Calu3 (cell line): ENCODE measurements at regions of chr4 and their contacts with region 1.

Region 1: DNA sequence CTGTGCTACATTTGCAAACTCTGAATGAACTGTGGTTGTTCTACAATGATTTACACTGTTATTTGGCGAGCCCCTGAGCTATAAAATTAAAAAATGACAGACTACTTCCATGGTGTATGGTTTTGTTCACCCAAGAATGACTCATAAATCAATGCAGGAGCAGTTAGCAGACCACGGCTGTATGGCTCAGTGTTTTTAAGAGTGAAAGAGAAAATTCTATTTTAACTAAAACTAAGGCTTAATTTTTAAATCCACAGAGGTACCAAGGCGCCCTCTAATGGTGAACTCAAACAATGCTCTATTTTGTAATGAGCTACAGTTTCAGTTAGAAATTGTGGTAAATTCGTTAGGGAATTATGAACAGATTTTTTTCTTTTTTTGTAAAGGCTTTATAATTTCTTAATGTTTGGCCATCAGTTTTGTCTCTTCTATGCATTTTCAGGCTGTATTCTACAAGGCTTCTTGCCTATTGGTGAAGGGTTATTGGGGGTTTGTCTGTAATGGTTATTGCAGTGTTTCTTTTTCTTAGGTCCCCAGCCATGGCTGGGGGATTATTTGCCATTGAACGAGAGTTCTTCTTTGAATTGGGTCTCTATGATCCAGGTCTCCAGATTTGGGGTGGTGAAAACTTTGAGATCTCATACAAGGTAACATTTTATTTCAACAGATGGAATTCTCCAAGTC is 32.5 kb downstream of the HMGB2 start:
- DNase-seq: peak; percentile 16
- H3K4me3 Mint-ChIP-seq: no peak overlapping the region
- H3K27ac Mint-ChIP-seq: no peak overlapping the region
- H3K4me1 Mint-ChIP-seq: peaks cover 7% of the 10 kb centered on the region
- H3K27me3 Mint-ChIP-seq: no peaks in the 10 kb centered on the region
- CTCF ChIP-seq: peak; percentile 19

Region 2: GRCh38 chr4:173013232-173013930 is 288.3 kb before region 1 on chr4:
- CTCF ChIA-PET with region 1: interaction called, 33 read pairs
- intact Hi-C with region 1: loop called (anchors 1 kb)
- DNase-seq: peak; percentile 34
- H3K4me3 Mint-ChIP-seq: no peak overlapping the region
- H3K27ac Mint-ChIP-seq: no peak overlapping the region
- H3K4me1 Mint-ChIP-seq: no peaks in the 10 kb centered on the region
- H3K27me3 Mint-ChIP-seq: no peaks in the 10 kb centered on the region
- CTCF ChIP-seq: peak; percentile 24

Region 3: DNA sequence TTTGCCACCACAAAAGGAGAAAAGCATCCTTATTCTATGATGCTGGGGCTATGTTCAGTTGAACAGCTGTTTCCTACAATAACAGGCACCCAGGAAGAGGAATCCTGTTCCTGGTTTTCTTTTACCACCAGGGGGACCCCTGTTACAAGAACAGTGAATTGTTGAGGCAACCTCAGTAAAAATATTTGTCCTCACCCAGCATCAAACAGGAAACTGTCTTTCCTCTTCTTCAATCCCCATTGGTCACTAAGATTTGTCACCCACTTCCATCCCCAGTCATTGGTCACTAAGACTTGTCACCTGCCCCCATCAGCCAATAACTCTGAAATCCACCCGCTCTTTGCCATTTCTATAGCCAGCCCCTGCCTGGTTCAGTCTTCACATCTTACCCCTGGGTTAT is 276.5 kb before region 1 on chr4:
- CTCF ChIA-PET with region 1: interaction called, 11 read pairs
- intact Hi-C with region 1: loop called (anchors 1 kb)
- DNase-seq: peak; percentile 72
- H3K4me3 Mint-ChIP-seq: no peak overlapping the region
- H3K27ac Mint-ChIP-seq: no peak overlapping the region
- H3K4me1 Mint-ChIP-seq: peaks cover 21% of the 10 kb centered on the region
- H3K27me3 Mint-ChIP-seq: peaks cover 10% of the 10 kb centered on the region
- CTCF ChIP-seq: peak; percentile 60

Region 4: GRCh38 chr4:173288296-173288695 is 13.4 kb before region 1 on chr4:
- CTCF ChIA-PET with region 1: interaction called, 4 read pairs
- intact Hi-C with region 1: loop called (anchors 1 kb)
- DNase-seq: peak; percentile 66
- H3K4me3 Mint-ChIP-seq: peak overlapping the region; percentile 48
- H3K27ac Mint-ChIP-seq: peak overlapping the region; percentile 44
- H3K4me1 Mint-ChIP-seq: peaks cover 18% of the 10 kb centered on the region
- H3K27me3 Mint-ChIP-seq: no peaks in the 10 kb centered on the region
- CTCF ChIP-seq: no peak